Endothelial cell of umbilical vein (primary cell): ENCODE measurements at regions of chr6 and their contacts with region 1.

Region 1: DNA sequence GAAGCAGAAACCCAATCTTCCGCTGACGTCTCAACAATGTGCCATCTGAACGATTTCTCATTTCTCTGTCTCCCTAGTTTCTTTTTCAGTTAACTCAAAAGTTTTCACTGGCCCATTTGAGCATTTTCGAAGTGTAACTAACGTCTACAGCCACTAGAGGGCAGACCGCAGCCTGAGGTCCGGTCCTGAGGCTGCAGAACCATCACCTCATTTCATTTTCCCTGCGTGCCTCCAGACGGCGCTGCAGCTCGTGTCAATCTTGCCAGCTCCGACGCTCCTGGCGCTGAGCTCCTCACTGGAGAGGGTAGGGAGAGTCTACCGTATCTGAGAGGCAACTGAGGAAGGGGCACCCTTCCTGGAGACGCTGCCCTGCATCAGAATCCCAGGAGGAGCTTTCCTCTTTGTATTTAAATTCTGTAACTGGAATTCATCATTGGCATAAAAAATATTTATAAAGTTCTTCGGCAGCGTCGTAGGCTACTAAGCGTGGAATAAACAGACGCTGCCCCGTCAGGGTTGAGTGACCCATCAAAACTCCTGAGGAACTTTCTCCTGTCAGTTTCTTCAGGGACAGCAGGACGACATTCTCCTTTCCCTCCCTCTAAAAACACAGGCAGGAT is 28.5 kb upstream of the DTNBP1 start:
- DNase-seq: peak; percentile 86
- H3K4me3 ChIP-seq: no peak overlapping the region
- H3K27ac ChIP-seq: no peak overlapping the region
- H3K4me1 ChIP-seq: peaks cover 3% of the 10 kb centered on the region
- H3K27me3 ChIP-seq: peaks cover 1 to 2% of the 10 kb centered on the region in 2 experiments
- CTCF ChIP-seq: peak; percentile 99 to 100
- POLR2A ChIP-seq: no peak

Region 2: DNA sequence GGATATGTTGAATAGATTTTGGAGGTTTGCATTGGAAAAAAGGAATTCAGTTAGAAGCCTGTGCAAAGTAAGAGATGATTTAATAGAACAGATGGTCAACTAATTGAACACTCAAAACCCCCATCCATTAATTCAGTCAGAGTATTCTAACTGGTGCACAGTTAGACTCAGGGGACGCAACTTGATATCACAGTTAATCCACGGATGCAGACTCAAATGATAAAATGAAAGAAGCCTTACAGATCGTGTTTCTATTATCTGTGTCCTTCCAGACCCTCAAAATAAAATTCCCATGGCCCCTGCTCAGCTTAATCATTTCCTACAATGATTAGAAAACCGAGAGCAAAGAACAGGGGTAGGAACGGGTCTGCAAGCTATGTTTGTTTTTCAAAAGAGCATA is 16.9 kb after region 1 on chr6:
- CTCF ChIA-PET with region 1: interaction called, 21 read pairs
- POLR2A ChIA-PET with region 1: no interaction called
- dilution Hi-C with region 1: no loop called
- intact Hi-C with region 1: no loop called
- DNase-seq: no peak
- H3K4me3 ChIP-seq: no peak overlapping the region
- H3K27ac ChIP-seq: no peak overlapping the region
- H3K4me1 ChIP-seq: no peaks in the 10 kb centered on the region
- H3K27me3 ChIP-seq: peaks cover 0 to 2% of the 10 kb centered on the region in 2 experiments
- CTCF ChIP-seq: no peak
- POLR2A ChIP-seq: no peak

Region 3: GRCh38 chr6:15922510-15923250 is 231.3 kb after region 1 on chr6:
- CTCF ChIA-PET with region 1: interaction called, 10 read pairs
- POLR2A ChIA-PET with region 1: no interaction called
- dilution Hi-C with region 1: no loop called
- intact Hi-C with region 1: no loop called
- DNase-seq: peak; percentile 99
- H3K4me3 ChIP-seq: no peak overlapping the region
- H3K27ac ChIP-seq: peak overlapping the region; percentile 86
- H3K4me1 ChIP-seq: peaks cover 23% of the 10 kb centered on the region
- H3K27me3 ChIP-seq: no peaks in the 10 kb centered on the region
- CTCF ChIP-seq: no peak
- POLR2A ChIP-seq: peak; percentile 76

Region 4: GRCh38 chr6:16154904-16155303 is 463.5 kb after region 1 on chr6:
- CTCF ChIA-PET with region 1: interaction called, 10 read pairs
- POLR2A ChIA-PET with region 1: no interaction called
- dilution Hi-C with region 1: no loop called
- intact Hi-C with region 1: no loop called
- DNase-seq: no peak
- H3K4me3 ChIP-seq: no peak overlapping the region
- H3K27ac ChIP-seq: no peak overlapping the region
- H3K4me1 ChIP-seq: no peaks in the 10 kb centered on the region
- H3K27me3 ChIP-seq: no peaks in the 10 kb centered on the region
- CTCF ChIP-seq: no peak
- POLR2A ChIP-seq: no peak

Region 5: GRCh38 chr6:16183187-16183664 is 491.9 kb after region 1 on chr6:
- CTCF ChIA-PET with region 1: interaction called, 287 read pairs
- POLR2A ChIA-PET with region 1: interaction called, 4 read pairs
- dilution Hi-C with region 1: no loop called
- intact Hi-C with region 1: loop called (anchors 1 kb)
- DNase-seq: peak; percentile 65
- H3K4me3 ChIP-seq: no peak overlapping the region
- H3K27ac ChIP-seq: no peak overlapping the region
- H3K4me1 ChIP-seq: no peaks in the 10 kb centered on the region
- H3K27me3 ChIP-seq: peaks cover 14% of the 10 kb centered on the region in 2 experiments
- CTCF ChIP-seq: peak; percentile 43 to 46
- POLR2A ChIP-seq: no peak

Region 6: DNA sequence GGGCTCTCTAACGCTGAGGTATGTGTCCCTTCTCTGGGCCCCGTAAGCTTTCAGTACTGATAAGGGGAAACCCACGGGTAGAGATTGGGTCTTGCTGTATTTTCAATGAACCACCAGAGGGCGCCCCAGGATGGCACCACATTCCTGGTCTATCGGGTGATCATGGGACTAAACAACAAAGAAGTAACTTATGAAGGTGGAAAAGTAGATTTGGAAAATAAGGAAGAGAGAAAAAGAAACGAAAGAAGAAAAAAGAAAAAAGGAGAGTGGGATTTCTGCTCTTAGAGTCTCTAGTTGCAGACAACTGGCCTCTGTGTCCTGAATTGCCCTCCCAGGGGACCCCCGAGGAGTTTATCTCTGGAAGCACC is 640.8 kb after region 1 on chr6:
- CTCF ChIA-PET with region 1: no interaction called
- POLR2A ChIA-PET with region 1: no interaction called
- dilution Hi-C with region 1: no loop called
- intact Hi-C with region 1: loop called (anchors 1 kb)
- DNase-seq: peak; percentile 89
- H3K4me3 ChIP-seq: no peak overlapping the region
- H3K27ac ChIP-seq: no peak overlapping the region
- H3K4me1 ChIP-seq: peaks cover 24% of the 10 kb centered on the region
- H3K27me3 ChIP-seq: no peaks in the 10 kb centered on the region
- CTCF ChIP-seq: peak; percentile 82
- POLR2A ChIP-seq: no peak